AG04450 (cell line): ENCODE measurements at regions of chr5 and their contacts with region 1.

Region 1: GRCh38 chr5:112951124-112951702 is 25.4 kb upstream of the DCP2 start:
- DNase-seq: no peak
- H3K4me3 ChIP-seq: no peak overlapping the region
- H3K27ac ChIP-seq: no peak overlapping the region
- H3K27me3 ChIP-seq: no peaks in the 10 kb centered on the region
- CTCF ChIP-seq: no peak

Region 2: DNA sequence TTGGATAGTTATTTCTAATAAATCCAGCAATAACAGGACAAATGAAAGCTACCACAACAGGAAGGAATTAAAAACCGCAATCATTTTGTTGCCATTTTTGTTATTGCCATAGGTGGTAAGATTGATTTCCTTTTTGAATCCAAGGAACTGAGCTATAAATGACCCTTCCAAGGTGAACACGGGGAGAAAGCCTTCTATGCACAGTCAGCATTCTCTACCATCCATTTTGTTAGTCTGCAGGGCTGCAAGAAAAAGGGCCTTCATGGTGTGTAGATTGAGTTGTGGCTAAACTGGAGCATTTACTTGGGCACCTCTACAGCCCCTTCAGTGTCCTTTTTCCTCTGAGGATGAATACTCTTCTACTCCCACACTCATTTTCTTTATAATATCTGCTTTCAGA is 10.5 kb before region 1 on chr5:
- CTCF ChIA-PET with region 1: interaction called, 10 read pairs
- POLR2A ChIA-PET with region 1: no interaction called
- DNase-seq: no peak
- H3K4me3 ChIP-seq: no peak overlapping the region
- H3K27ac ChIP-seq: no peak overlapping the region
- H3K27me3 ChIP-seq: no peaks in the 10 kb centered on the region
- CTCF ChIP-seq: no peak

Region 3: DNA sequence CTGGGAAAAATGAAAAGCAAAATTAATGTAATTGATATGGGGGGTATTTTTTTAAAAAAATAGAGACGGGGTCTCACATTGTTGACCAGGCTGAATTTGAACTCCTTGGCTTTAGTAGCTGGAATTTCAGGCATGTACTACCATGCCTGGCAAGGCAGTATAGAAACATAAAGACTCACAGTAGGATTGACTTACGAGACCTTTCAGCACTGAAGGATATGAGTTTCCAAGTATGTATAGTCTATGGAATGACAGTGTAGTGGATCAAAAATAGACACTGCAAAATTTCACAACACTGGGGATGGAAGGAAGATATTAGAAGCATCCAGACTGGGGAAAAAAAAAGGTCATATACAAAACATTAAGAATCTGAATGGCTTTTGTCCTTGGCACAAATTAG is 32.1 kb after region 1 on chr5:
- CTCF ChIA-PET with region 1: no interaction called
- POLR2A ChIA-PET with region 1: interaction called, 11 read pairs
- DNase-seq: no peak
- H3K4me3 ChIP-seq: no peak overlapping the region
- H3K27ac ChIP-seq: no peak overlapping the region
- H3K27me3 ChIP-seq: no peaks in the 10 kb centered on the region
- CTCF ChIP-seq: no peak

Region 4: DNA sequence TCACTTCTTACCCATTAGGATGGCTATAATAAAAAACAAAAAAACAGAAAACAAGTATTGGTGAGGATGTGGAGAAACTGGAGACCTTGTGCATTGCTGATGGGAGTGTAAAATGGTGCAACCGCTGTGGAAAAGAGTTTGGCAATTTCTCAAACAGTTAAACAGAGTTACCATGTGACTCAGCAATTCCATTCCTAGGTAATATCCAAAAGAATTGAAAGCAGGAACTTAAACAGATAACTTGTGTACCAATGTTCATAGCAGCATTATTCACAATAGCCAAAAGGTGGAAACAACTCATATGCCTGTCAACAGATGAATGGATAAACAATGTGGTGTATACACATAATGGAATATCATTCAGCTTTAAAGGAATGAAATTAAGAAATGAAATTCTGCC is 54.2 kb after region 1 on chr5:
- CTCF ChIA-PET with region 1: no interaction called
- POLR2A ChIA-PET with region 1: no interaction called
- DNase-seq: no peak
- H3K4me3 ChIP-seq: no peak overlapping the region
- H3K27ac ChIP-seq: no peak overlapping the region
- H3K27me3 ChIP-seq: no peaks in the 10 kb centered on the region
- CTCF ChIP-seq: no peak